Calu3 (cell line): ENCODE measurements at regions of chr7 and their contacts with region 1.

Region 1: DNA sequence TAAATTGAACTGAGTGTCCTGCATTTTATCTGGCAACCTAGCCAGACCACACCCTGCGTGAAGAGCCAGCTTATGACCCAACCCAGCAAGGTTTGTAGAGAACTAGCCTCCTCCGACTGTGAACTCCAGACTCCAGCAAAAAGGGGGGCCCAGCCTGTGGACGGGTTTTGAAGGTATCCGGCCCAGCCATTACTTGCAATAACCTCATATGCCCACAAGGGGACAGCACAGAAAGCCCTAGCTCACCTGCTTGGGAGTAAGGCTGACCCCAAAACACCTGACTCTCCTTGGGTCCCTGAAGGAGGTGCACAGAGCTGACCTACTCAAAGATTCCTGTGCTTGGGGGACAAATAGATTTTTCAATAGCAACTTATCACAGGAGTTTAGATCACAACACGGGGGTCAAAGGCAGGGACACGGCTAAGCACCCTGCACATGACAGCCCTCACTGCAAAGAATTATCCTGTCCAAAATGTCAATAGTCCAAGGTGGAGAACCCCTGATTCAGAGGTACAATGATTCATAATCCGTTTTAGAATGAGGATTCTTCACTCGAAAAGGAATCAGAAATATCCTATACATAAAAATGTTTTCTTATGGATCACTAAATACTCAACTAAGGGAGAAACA is 4.6 kb downstream of the TRPV6 start:
- DNase-seq: peak; percentile 63
- H3K4me3 Mint-ChIP-seq: no peak overlapping the region
- H3K27ac Mint-ChIP-seq: no peak overlapping the region
- H3K4me1 Mint-ChIP-seq: peaks cover 38% of the 10 kb centered on the region
- H3K27me3 Mint-ChIP-seq: peaks cover 76% of the 10 kb centered on the region
- CTCF ChIP-seq: peak; percentile 92

Region 2: DNA sequence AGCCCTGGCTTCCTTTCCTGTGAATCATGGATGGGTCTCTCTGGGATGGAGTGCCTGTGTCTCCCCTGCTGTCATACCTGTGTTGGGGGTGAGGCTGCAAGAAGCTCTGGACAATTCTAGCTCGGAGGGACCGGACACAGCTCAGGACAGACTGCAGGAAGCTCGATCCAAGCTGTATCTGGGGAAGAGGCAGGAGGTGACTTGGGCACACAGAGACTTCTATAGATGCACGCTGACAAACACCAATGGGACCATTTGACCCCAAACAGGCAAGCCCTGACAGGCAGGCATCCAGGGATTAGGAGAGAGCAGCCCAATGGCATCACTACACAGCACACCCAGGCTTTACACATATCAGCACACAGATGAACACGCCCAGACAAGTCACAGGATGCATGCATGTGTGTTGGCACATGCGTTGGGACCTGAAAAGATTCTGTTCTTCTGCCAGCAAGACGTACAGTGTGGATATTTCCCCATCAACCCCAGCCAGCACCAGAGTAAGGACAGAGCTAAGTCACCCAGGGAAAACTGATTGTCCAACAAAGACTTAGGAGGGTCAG is 62.8 kb after region 1 on chr7:
- CTCF ChIA-PET with region 1: no interaction called
- intact Hi-C with region 1: loop called (anchors 5 kb)
- DNase-seq: no peak
- H3K4me3 Mint-ChIP-seq: no peak overlapping the region
- H3K27ac Mint-ChIP-seq: no peak overlapping the region
- H3K4me1 Mint-ChIP-seq: no peaks in the 10 kb centered on the region
- H3K27me3 Mint-ChIP-seq: peaks cover 98% of the 10 kb centered on the region
- CTCF ChIP-seq: no peak

Region 3: DNA sequence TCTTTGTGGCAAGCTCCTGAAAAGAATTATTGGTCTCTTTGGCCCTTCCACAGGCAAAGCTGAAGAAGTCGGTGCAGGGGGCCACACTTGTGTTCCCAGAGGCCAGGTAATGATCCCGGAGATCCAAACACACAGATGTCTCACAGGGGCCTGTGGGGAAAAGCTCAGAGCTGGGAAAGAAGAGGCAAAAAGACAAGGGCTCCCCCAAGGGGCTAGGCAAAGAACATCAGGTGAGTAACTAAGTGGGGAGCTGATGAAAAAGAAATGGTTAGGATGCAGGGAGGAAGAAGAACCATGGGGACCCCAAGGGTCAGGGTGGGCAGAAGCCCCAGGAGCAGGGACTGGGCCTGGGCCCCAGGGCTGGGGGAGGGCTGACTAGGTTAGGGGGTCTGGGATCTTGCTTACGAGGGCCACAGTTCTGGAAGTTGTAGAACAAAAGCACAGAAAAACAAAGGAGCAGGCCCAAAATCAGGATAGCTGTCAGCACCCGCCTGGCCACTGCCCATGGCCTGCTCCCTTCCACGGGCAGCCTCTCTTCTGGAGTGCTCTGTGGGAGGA is 80.0 kb after region 1 on chr7:
- CTCF ChIA-PET with region 1: interaction called, 40 read pairs
- intact Hi-C with region 1: loop called (anchors 1 kb)
- DNase-seq: peak; percentile 43
- H3K4me3 Mint-ChIP-seq: no peak overlapping the region
- H3K27ac Mint-ChIP-seq: no peak overlapping the region
- H3K4me1 Mint-ChIP-seq: peaks cover 15% of the 10 kb centered on the region
- H3K27me3 Mint-ChIP-seq: peaks cover 49% of the 10 kb centered on the region
- CTCF ChIP-seq: peak; percentile 25

Region 4: GRCh38 chr7:143008007-143008901 is 127.3 kb after region 1 on chr7:
- CTCF ChIA-PET with region 1: no interaction called
- intact Hi-C with region 1: loop called (anchors 2 kb)
- DNase-seq: peak; percentile 85
- H3K4me3 Mint-ChIP-seq: no peak overlapping the region
- H3K27ac Mint-ChIP-seq: no peak overlapping the region
- H3K4me1 Mint-ChIP-seq: peaks cover 7% of the 10 kb centered on the region
- H3K27me3 Mint-ChIP-seq: peaks cover 70% of the 10 kb centered on the region
- CTCF ChIP-seq: peak; percentile 93